CD8-positive, alpha-beta T cell (primary cell): ENCODE measurements at regions of chr9 and their contacts with region 1.

Region 1: GRCh38 chr9:35790385-35791296 is 750 bp upstream of the NPR2 start:
- DNase-seq: peak in 8 of 9 experiments; percentile 34 to 80 (median 64)
- ATAC-seq: peak; percentile 97
- H3K4me3 ChIP-seq: no peak overlapping the region
- H3K4me3 Mint-ChIP-seq: no peak overlapping the region
- H3K27ac ChIP-seq: no peak overlapping the region
- H3K27ac Mint-ChIP-seq: no peak overlapping the region
- H3K4me1 ChIP-seq: no peaks in the 10 kb centered on the region
- H3K4me1 Mint-ChIP-seq: peaks cover 4% of the 10 kb centered on the region
- H3K27me3 ChIP-seq: no peaks in the 10 kb centered on the region
- H3K27me3 Mint-ChIP-seq: no peaks in the 10 kb centered on the region
- CTCF ChIP-seq: peak; percentile 75

Region 2: DNA sequence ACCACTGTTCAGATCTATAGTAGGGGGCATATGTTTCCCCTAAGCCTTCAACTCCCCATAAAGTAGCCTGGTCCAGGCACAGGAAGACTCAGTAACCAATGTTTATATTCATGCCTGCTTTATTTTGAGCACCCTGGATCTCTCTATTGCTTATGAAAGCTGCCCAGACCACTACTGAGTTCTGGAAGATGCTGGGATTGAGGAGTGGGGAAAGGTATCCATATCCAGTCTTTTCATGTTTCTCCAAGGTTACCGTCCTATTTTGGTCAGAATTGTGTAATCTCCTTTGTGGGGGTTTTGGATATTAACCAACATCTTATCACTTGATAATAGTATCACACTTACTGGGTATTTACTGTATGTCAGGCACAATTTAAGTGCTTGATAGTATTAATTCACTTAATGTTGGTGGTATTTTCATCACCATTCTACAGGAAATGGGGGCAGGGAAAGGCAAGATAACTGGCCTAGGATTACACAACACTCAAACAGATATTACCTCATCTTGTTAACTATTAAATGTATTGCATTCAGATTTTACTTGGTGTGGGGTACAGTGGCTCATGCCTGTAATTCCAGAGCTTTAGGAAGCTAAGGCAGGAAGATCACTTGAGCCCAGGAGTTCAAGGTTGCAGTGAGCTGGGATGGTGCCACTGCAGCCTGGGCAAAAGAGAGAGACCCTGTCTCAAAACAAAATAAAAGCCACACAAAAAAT is 264.4 kb before region 1 on chr9:
- CTCF ChIA-PET with region 1: no interaction called
- POLR2A ChIA-PET with region 1: no interaction called
- intact Hi-C with region 1: no loop called
- DNase-seq: no peak
- ATAC-seq: no peak
- H3K4me3 ChIP-seq: no peak overlapping the region
- H3K4me3 Mint-ChIP-seq: no peak overlapping the region
- H3K27ac ChIP-seq: no peak overlapping the region
- H3K27ac Mint-ChIP-seq: no peak overlapping the region
- H3K4me1 ChIP-seq: no peaks in the 10 kb centered on the region
- H3K4me1 Mint-ChIP-seq: no peaks in the 10 kb centered on the region
- H3K27me3 ChIP-seq: no peaks in the 10 kb centered on the region
- H3K27me3 Mint-ChIP-seq: no peaks in the 10 kb centered on the region
- CTCF ChIP-seq: no peak

Region 3: GRCh38 chr9:35628389-35628991 is 162.2 kb before region 1 on chr9:
- CTCF ChIA-PET with region 1: no interaction called
- POLR2A ChIA-PET with region 1: no interaction called
- intact Hi-C with region 1: no loop called
- DNase-seq: no peak
- ATAC-seq: no peak
- H3K4me3 ChIP-seq: no peak overlapping the region
- H3K4me3 Mint-ChIP-seq: no peak overlapping the region
- H3K27ac ChIP-seq: no peak overlapping the region
- H3K27ac Mint-ChIP-seq: no peak overlapping the region
- H3K4me1 ChIP-seq: no peaks in the 10 kb centered on the region
- H3K4me1 Mint-ChIP-seq: no peaks in the 10 kb centered on the region
- H3K27me3 ChIP-seq: no peaks in the 10 kb centered on the region
- H3K27me3 Mint-ChIP-seq: no peaks in the 10 kb centered on the region
- CTCF ChIP-seq: no peak

Region 4: DNA sequence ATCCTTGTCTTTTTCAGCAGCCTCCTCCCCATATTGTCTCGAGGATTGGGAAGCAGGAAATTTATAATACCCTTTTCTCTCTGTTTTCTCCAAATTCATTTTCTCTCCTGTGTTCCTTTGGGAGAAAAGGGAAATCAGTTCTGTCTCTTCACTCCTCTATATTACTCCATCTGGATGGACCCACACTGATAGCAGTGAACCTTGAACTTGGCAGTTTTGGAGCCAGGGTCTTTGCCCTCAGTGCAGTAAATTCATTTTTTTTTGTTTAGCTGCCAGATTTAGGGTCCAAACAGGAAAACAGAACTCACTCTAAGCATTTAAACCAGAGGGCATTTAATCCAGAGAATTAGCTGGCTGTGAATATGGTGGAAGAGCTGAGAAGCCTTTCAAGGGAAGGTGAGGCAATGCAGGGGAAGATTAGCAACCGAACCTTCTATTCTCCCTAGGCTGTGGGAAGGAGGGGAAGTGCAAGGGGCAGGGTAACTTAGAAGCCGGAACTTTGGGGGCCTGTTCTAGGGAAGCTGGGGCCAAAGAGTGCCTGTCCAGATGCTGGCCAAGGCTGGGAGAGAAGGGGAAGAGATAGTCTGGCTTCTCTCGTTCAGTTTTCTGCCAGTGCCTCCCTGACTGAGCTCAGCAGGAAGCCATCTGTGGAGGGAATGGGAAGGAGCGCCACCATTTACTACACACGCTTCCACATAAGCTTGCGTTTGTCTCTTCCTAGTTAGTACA is 15.6 kb before region 1 on chr9:
- CTCF ChIA-PET with region 1: interaction called, 16 read pairs
- POLR2A ChIA-PET with region 1: no interaction called
- intact Hi-C with region 1: no loop called
- DNase-seq: no peak
- ATAC-seq: no peak
- H3K4me3 ChIP-seq: no peak overlapping the region
- H3K4me3 Mint-ChIP-seq: no peak overlapping the region
- H3K27ac ChIP-seq: no peak overlapping the region
- H3K27ac Mint-ChIP-seq: no peak overlapping the region
- H3K4me1 ChIP-seq: no peaks in the 10 kb centered on the region
- H3K4me1 Mint-ChIP-seq: no peaks in the 10 kb centered on the region
- H3K27me3 ChIP-seq: no peaks in the 10 kb centered on the region
- H3K27me3 Mint-ChIP-seq: no peaks in the 10 kb centered on the region
- CTCF ChIP-seq: no peak

Region 5: DNA sequence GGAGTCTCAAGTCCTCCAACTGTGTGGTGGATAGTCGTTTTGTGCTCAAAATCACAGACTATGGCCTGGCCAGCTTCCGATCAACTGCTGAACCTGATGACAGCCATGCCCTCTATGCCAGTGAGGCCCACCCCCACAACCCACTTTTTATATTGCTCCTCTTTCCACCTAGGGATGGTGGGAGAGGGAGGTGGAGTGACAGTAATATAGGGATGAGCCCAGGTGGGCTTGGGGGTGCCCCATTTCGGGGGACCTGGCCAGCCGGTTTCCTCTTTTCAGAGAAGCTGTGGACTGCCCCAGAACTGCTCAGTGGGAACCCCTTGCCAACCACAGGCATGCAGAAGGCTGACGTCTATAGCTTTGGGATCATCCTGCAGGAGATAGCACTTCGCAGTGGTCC is 14.9 kb after region 1 on chr9:
- CTCF ChIA-PET with region 1: interaction called, 16 read pairs
- POLR2A ChIA-PET with region 1: no interaction called
- intact Hi-C with region 1: no loop called
- DNase-seq: no peak
- ATAC-seq: no peak
- H3K4me3 ChIP-seq: no peak overlapping the region
- H3K4me3 Mint-ChIP-seq: no peak overlapping the region
- H3K27ac ChIP-seq: no peak overlapping the region
- H3K27ac Mint-ChIP-seq: no peak overlapping the region
- H3K4me1 ChIP-seq: no peaks in the 10 kb centered on the region
- H3K4me1 Mint-ChIP-seq: peaks cover 4% of the 10 kb centered on the region
- H3K27me3 ChIP-seq: no peaks in the 10 kb centered on the region
- H3K27me3 Mint-ChIP-seq: no peaks in the 10 kb centered on the region
- CTCF ChIP-seq: no peak

Region 6: GRCh38 chr9:35829084-35829763 is 38.6 kb after region 1 on chr9 and contains the start of gene TMEM8B:
- CTCF ChIA-PET with region 1: interaction called, 36 read pairs
- POLR2A ChIA-PET with region 1: interaction called, 3 read pairs
- intact Hi-C with region 1: loop called (anchors 1 kb)
- DNase-seq: peak; percentile 88 to 96 (median 94)
- ATAC-seq: peak; percentile 93
- H3K4me3 ChIP-seq: peak within 1 kb of the TSS; percentile 67 to 89
- H3K4me3 Mint-ChIP-seq: peak within 1 kb of the TSS; percentile 95
- H3K27ac ChIP-seq: peak within 1 kb of the TSS; percentile 64 to 71
- H3K27ac Mint-ChIP-seq: peak within 1 kb of the TSS; percentile 91
- H3K4me1 ChIP-seq: peaks cover 13% of the 10 kb centered on the region
- H3K4me1 Mint-ChIP-seq: peaks cover 41% of the 10 kb centered on the region
- H3K27me3 ChIP-seq: no peaks in the 10 kb centered on the region
- H3K27me3 Mint-ChIP-seq: no peaks in the 10 kb centered on the region
- CTCF ChIP-seq: no peak
- total RNA-seq, gene TMEM8B: 6.4 to 7.2 TPM

Region 7: GRCh38 chr9:35835216-35835632 is 44.6 kb after region 1 on chr9:
- CTCF ChIA-PET with region 1: interaction called, 13 read pairs
- POLR2A ChIA-PET with region 1: no interaction called
- intact Hi-C with region 1: no loop called
- DNase-seq: peak in 2 of 9 experiments; percentile 27 to 35
- ATAC-seq: peak; percentile 29
- H3K4me3 ChIP-seq: no peak overlapping the region
- H3K4me3 Mint-ChIP-seq: no peak overlapping the region
- H3K27ac ChIP-seq: no peak overlapping the region
- H3K27ac Mint-ChIP-seq: no peak overlapping the region
- H3K4me1 ChIP-seq: no peaks in the 10 kb centered on the region
- H3K4me1 Mint-ChIP-seq: peaks cover 17% of the 10 kb centered on the region
- H3K27me3 ChIP-seq: no peaks in the 10 kb centered on the region
- H3K27me3 Mint-ChIP-seq: no peaks in the 10 kb centered on the region
- CTCF ChIP-seq: no peak

Region 8: DNA sequence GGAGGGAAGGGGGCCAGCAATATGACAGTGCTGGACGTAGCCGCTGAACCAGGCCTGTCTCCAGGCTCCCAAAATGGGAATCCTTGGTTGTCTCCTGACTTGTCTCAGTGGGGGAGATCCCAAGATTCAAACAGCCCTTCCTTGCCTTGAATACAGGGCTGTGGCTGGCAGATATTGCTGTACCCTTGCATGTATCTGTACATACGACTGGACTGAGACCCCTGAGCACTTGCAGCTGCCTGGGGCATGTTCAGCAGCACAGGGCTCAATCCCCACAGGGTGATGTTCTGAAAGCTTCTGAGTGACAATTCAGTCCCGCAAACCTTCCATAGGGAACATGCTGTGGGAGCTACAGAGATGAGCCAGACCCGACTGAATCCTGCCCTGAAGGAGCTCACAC is 66.2 kb after region 1 on chr9:
- CTCF ChIA-PET with region 1: interaction called, 14 read pairs
- POLR2A ChIA-PET with region 1: no interaction called
- intact Hi-C with region 1: no loop called
- DNase-seq: peak in 1 of 9 experiments; percentile 11
- ATAC-seq: no peak
- H3K4me3 ChIP-seq: no peak overlapping the region
- H3K4me3 Mint-ChIP-seq: no peak overlapping the region
- H3K27ac ChIP-seq: no peak overlapping the region
- H3K27ac Mint-ChIP-seq: no peak overlapping the region
- H3K4me1 ChIP-seq: no peaks in the 10 kb centered on the region
- H3K4me1 Mint-ChIP-seq: peaks cover 5% of the 10 kb centered on the region
- H3K27me3 ChIP-seq: no peaks in the 10 kb centered on the region
- H3K27me3 Mint-ChIP-seq: peaks cover 6% of the 10 kb centered on the region
- CTCF ChIP-seq: no peak

Region 9: GRCh38 chr9:35882263-35882848 is 91.7 kb after region 1 on chr9:
- CTCF ChIA-PET with region 1: interaction called, 101 read pairs
- POLR2A ChIA-PET with region 1: interaction called, 4 read pairs
- intact Hi-C with region 1: loop called (anchors 1 kb)
- DNase-seq: peak; percentile 49 to 88 (median 80)
- ATAC-seq: peak; percentile 88
- H3K4me3 ChIP-seq: no peak overlapping the region
- H3K4me3 Mint-ChIP-seq: no peak overlapping the region
- H3K27ac ChIP-seq: no peak overlapping the region
- H3K27ac Mint-ChIP-seq: no peak overlapping the region
- H3K4me1 ChIP-seq: no peaks in the 10 kb centered on the region
- H3K4me1 Mint-ChIP-seq: no peaks in the 10 kb centered on the region
- H3K27me3 ChIP-seq: no peaks in the 10 kb centered on the region
- H3K27me3 Mint-ChIP-seq: peaks cover 4% of the 10 kb centered on the region
- CTCF ChIP-seq: peak; percentile 96